ENCODE measurements at regions of chr15 and their contacts with region 1.

Region 1: DNA sequence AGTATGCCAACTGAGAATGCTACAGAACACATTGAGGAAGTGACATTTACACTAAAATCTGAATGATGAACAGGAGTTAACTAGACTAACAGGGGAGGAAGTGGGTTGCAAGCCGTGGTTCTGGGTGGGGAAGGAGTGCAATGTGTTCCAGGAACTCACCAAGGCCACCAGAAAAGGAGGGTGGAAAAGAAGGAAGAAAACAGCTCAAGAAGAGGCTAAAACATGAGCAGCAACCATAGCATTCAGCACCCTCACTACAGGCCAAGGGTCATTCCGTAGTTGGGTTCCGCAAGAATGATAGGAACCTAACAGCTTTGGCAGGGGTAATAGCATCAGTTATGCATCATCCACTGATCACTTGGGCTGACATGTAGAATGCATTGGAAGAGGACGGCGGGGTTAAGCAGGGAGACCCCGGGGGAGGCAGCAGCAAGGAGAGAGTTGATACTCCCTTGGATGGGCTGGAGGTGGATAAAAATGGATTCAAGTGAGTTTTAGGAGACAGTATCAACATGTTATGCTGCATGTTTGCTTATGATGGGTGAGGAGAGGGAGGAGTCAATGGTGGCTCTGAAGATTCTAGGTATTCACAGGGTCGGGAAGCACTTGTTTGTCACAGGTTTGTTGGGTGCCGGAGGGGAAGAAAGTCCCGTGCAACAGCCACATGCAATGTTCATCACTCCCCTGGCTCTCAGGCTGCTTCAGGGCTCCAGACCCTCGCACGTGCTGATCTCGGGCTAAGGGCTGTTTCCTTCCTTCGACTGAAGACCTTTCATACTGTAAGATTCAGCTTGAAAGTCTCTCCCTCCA is 53.2 kb downstream of the LIPC start:
- DNase-seq: peak; percentile 77
- ATAC-seq: peak; percentile 82
- H3K4me3 Mint-ChIP-seq: peak overlapping the region; percentile 76
- H3K27ac Mint-ChIP-seq: peak overlapping the region; percentile 97
- H3K4me1 Mint-ChIP-seq: peaks cover 48% of the 10 kb centered on the region
- H3K27me3 Mint-ChIP-seq: no peaks in the 10 kb centered on the region

Region 2: DNA sequence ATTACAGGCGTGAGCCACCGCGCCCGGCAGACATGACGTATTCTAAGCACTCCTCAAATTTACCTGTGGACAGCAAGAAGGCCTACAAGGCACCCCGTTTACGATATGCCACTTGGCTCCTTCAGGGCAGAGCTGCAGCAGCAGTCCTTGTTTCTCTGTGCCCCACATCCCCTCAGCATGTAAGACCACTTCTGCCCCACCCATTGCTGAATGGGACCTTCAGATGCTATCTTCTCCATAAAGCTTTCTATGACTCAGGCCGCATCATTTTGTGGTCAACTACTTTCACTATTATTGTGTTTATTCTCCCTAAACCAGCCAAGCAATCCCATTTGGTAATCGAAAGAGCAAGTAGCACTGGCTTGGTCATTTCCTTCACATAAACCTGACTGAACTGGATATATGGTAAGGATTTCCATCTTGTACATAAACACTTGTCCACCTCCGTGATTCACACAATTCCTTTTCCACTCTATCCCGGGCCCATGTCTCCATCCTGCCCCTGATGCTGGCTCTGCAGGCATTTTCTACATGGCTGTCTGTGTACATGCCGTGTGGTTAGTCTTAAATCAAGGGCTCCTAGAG is 27.5 kb before region 1 on chr15:
- POLR2A ChIA-PET with region 1: interaction called, 15 read pairs
- DNase-seq: no peak
- ATAC-seq: peak; percentile 49
- H3K4me3 Mint-ChIP-seq: peak overlapping the region; percentile 28
- H3K27ac Mint-ChIP-seq: peak overlapping the region; percentile 89
- H3K4me1 Mint-ChIP-seq: peaks cover 67% of the 10 kb centered on the region
- H3K27me3 Mint-ChIP-seq: no peaks in the 10 kb centered on the region

Region 3: GRCh38 chr15:58495891-58496408 is 11.0 kb after region 1 on chr15:
- POLR2A ChIA-PET with region 1: interaction called, 15 read pairs
- DNase-seq: no peak
- ATAC-seq: peak; percentile 88
- H3K4me3 Mint-ChIP-seq: peak overlapping the region; percentile 49
- H3K27ac Mint-ChIP-seq: peak overlapping the region; percentile 79
- H3K4me1 Mint-ChIP-seq: peaks cover 35% of the 10 kb centered on the region
- H3K27me3 Mint-ChIP-seq: no peaks in the 10 kb centered on the region

Region 4: GRCh38 chr15:58517682-58518525 is 32.9 kb after region 1 on chr15:
- POLR2A ChIA-PET with region 1: interaction called, 66 read pairs
- DNase-seq: no peak
- ATAC-seq: peak; percentile 30
- H3K4me3 Mint-ChIP-seq: peak overlapping the region; percentile 59
- H3K27ac Mint-ChIP-seq: peak overlapping the region; percentile 90
- H3K4me1 Mint-ChIP-seq: peaks cover 64% of the 10 kb centered on the region
- H3K27me3 Mint-ChIP-seq: no peaks in the 10 kb centered on the region

Region 5: GRCh38 chr15:58546635-58547627 is 61.9 kb after region 1 on chr15:
- POLR2A ChIA-PET with region 1: interaction called, 20 read pairs
- DNase-seq: no peak
- ATAC-seq: no peak
- H3K4me3 Mint-ChIP-seq: peak overlapping the region; percentile 20
- H3K27ac Mint-ChIP-seq: peak overlapping the region; percentile 98
- H3K4me1 Mint-ChIP-seq: peaks cover 46% of the 10 kb centered on the region
- H3K27me3 Mint-ChIP-seq: no peaks in the 10 kb centered on the region

Region 6: DNA sequence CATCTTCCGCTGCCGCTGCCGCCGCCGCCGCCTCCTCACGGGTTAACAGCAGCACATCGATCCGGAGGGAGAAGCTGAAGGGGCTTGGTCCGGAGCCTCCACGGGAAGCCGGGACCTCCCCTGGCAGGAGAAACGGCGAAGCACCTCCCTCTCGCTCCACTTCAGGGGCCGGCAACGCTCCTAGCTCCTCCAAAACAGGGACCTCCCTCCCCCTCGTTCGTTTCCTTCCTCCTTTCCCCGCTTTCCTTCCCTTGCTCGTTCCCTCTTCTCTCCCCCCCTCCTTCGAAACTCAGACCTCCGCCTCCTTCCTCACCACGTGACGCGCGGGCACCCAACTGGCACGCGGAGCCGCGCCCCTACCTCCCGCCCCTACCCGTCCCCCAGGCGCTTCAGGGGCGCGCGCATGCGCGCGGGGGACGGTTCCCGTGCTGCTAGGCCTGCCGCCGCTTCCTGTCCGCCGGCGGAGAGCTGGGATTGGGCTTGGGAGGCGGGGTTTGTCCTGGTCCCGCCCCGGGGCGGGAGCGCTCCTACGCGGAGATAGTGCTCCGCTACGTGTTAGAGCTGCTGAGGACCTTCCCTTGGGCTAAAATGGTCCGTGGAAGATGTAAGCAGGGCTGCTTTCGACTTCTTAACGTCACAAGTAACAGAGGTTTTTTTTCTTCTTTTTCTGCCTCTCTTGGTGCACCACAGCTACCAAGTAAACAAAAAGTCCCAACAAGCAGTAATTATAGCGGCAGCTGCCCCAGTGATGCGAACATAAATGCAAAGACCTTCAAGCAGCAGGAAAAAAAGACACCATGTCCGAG is 264.7 kb after region 1 on chr15 and contains the start of gene ADAM10:
- POLR2A ChIA-PET with region 1: interaction called, 13 read pairs
- DNase-seq: peak; percentile 96
- ATAC-seq: peak; percentile 91
- H3K4me3 Mint-ChIP-seq: peak within 1 kb of the TSS; percentile 98
- H3K27ac Mint-ChIP-seq: peak within 1 kb of the TSS; percentile 97
- H3K4me1 Mint-ChIP-seq: peaks cover 25% of the 10 kb centered on the region
- H3K27me3 Mint-ChIP-seq: no peaks in the 10 kb centered on the region
- total RNA-seq, gene ADAM10: 173 to 175 TPM

Measured in activated naive CD8-positive, alpha-beta T cell treated with anti-CD3 and anti-CD28 coated beads, Interleukin-2, amount 10 ng/mL, durations not matched to agents 7 days and 5 days (primary cell).